ENCODE measurements at regions of chr12 and their contacts with region 1.

Region 1: GRCh38 chr12:118346895-118347294 is 25.8 kb downstream of the TAOK3 start:
- DNase-seq: peak in 1 of 4 experiments; percentile 52
- ATAC-seq: peak; percentile 67
- H3K4me3 ChIP-seq: no peak overlapping the region
- H3K27ac ChIP-seq: peak overlapping the region; percentile 60; the same call in 2 of the 3 replicates
- H3K4me1 ChIP-seq: peaks cover 10 to 37% of the 10 kb centered on the region in 2 experiments; a peak in 4 of 5 replicates
- H3K27me3 ChIP-seq: no peaks in the 10 kb centered on the region
- CTCF ChIP-seq: no peak
- EP300 ChIP-seq: no peak
- POLR2A ChIP-seq: no peak
- RAD21 ChIP-seq: no peak

Region 2: GRCh38 chr12:117980607-117981006 is 366.3 kb before region 1 on chr12:
- CTCF ChIA-PET with region 1: no interaction called
- POLR2A ChIA-PET with region 1: no interaction called
- in situ Hi-C with region 1: no loop called
- intact Hi-C with region 1: no loop called
- DNase-seq: no peak
- ATAC-seq: no peak
- H3K4me3 ChIP-seq: no peak overlapping the region
- H3K27ac ChIP-seq: no peak overlapping the region
- H3K4me1 ChIP-seq: no peaks in the 10 kb centered on the region
- H3K27me3 ChIP-seq: peaks cover 14 to 16% of the 10 kb centered on the region in 2 experiments; a peak in 4 of 5 replicates
- CTCF ChIP-seq: no peak
- EP300 ChIP-seq: no peak
- POLR2A ChIP-seq: no peak
- RAD21 ChIP-seq: no peak

Region 3: DNA sequence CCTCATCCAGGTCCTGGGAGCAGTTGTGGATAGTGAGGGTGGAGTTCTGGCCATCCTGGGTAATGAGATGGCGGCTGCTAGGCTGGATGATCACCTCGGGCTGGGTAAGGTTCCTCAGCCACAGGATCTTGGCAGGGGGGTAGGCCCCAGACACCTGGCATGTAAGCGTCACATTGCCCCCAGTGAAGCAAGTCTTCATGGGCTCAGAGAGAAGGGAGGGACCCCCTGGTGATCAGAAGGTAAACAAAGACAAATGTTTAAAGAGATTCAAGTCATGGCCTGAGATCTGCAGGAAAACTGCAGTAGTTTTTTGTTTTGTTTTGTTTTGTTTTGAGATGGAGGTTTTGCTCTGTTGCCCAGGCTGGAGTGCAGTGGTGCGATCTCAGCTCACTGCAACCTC is 273.1 kb before region 1 on chr12:
- CTCF ChIA-PET with region 1: no interaction called
- POLR2A ChIA-PET with region 1: no interaction called
- in situ Hi-C with region 1: no loop called
- intact Hi-C with region 1: no loop called
- DNase-seq: no peak
- ATAC-seq: no peak
- H3K4me3 ChIP-seq: no peak overlapping the region
- H3K27ac ChIP-seq: no peak overlapping the region
- H3K4me1 ChIP-seq: no peaks in the 10 kb centered on the region
- H3K27me3 ChIP-seq: peaks cover 5 to 19% of the 10 kb centered on the region in 2 experiments
- CTCF ChIP-seq: no peak
- EP300 ChIP-seq: no peak
- POLR2A ChIP-seq: no peak
- RAD21 ChIP-seq: no peak

Region 4: GRCh38 chr12:118330421-118331018 is 16.4 kb before region 1 on chr12:
- CTCF ChIA-PET with region 1: no interaction called
- POLR2A ChIA-PET with region 1: interaction called, 3 read pairs
- in situ Hi-C with region 1: no loop called
- intact Hi-C with region 1: loop called (anchors 2 kb)
- DNase-seq: peak; percentile 50 to 84 (median 67)
- ATAC-seq: peak; percentile 98
- H3K4me3 ChIP-seq: no peak overlapping the region
- H3K27ac ChIP-seq: peak overlapping the region; percentile 11; the same call in 1 of the 3 replicates
- H3K4me1 ChIP-seq: peaks cover 12 to 15% of the 10 kb centered on the region in 2 experiments
- H3K27me3 ChIP-seq: no peaks in the 10 kb centered on the region
- CTCF ChIP-seq: no peak
- EP300 ChIP-seq: peak; percentile 91
- POLR2A ChIP-seq: no peak
- RAD21 ChIP-seq: no peak

Region 5: GRCh38 chr12:118357257-118358007 is 10.5 kb after region 1 on chr12:
- CTCF ChIA-PET with region 1: no interaction called
- POLR2A ChIA-PET with region 1: interaction called, 46 read pairs
- in situ Hi-C with region 1: no loop called
- intact Hi-C with region 1: no loop called
- DNase-seq: peak; percentile 63 to 90 (median 80)
- ATAC-seq: peak; percentile 87
- H3K4me3 ChIP-seq: peak overlapping the region; percentile 41
- H3K27ac ChIP-seq: peak overlapping the region; percentile 88
- H3K4me1 ChIP-seq: peaks cover 8 to 20% of the 10 kb centered on the region in 2 experiments; a peak in 3 of 5 replicates
- H3K27me3 ChIP-seq: no peaks in the 10 kb centered on the region
- CTCF ChIP-seq: peak in 2 of 3 experiments; percentile 7 to 55; a peak in 4 of 6 replicates
- EP300 ChIP-seq: peak; percentile 71
- POLR2A ChIP-seq: 0 out of 2 replicates have a peak, but pooled peaks have one; percentile 49
- RAD21 ChIP-seq: peak; percentile 7 to 21; a peak in 2 of 4 replicates